ENCODE measurements at regions of chr14 and their contacts with region 1.

Region 1: GRCh38 chr14:69242311-69243224 is 17.4 kb upstream of the GALNT16 start:
- DNase-seq: no peak
- H3K4me3 ChIP-seq: no peak overlapping the region
- H3K27ac ChIP-seq: peak overlapping the region; percentile 25
- H3K4me1 ChIP-seq: peaks cover 26% of the 10 kb centered on the region
- H3K27me3 ChIP-seq: no peaks in the 10 kb centered on the region
- CTCF ChIP-seq: peak; percentile 86

Region 2: DNA sequence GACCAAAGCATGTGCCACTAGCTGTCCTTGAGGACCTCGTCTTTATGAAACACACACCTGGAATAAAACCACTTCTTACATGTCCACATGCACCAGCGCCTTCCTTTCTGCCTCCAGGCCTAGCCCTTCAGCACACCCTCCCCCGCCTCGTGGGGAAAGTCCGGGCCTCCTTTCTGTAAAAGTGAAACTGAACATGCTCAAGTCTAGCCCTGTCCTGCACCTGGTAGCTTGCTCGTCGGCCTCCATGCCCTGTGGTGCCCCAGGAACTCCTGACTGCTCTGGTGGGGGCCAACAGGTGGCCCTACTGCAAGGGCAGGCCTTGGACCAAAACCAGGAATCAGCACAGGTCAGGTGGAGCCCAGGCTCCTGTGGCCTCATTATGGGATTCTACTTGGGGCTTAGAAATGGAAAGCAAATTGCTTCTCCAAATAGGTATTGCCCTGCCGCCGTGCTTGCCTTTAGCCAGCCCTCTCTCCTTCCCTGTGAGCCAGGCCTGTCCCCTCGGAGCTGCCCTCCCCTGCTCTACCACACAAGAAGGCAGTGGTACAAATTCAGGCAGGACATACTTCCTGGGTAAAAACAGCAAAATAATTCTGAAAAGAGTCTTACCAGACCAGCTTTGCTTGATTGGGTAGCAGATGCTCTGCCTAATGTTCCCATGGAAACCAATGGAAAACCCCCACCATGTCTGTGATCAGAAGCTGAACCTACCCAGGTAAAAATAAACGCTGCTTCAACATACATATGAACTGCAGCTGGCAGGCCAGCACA is 112.0 kb after region 1 on chr14:
- intact Hi-C with region 1: loop called (anchors 10 kb)
- DNase-seq: no peak
- H3K4me3 ChIP-seq: no peak overlapping the region
- H3K27ac ChIP-seq: peak overlapping the region; percentile 48
- H3K4me1 ChIP-seq: peaks cover 16% of the 10 kb centered on the region
- H3K27me3 ChIP-seq: peaks cover 4% of the 10 kb centered on the region
- CTCF ChIP-seq: no peak

Region 3: GRCh38 chr14:69460093-69460701 is 217.6 kb after region 1 on chr14:
- intact Hi-C with region 1: loop called (anchors 2 kb)
- DNase-seq: peak; percentile 44
- H3K4me3 ChIP-seq: no peak overlapping the region
- H3K27ac ChIP-seq: no peak overlapping the region
- H3K4me1 ChIP-seq: no peaks in the 10 kb centered on the region
- H3K27me3 ChIP-seq: no peaks in the 10 kb centered on the region
- CTCF ChIP-seq: peak; percentile 82